AG04450 (cell line): ENCODE measurements at regions of chr1 and their contacts with region 1.

Region 1: GRCh38 chr1:212749821-212750535 is 41.6 kb downstream of the NSL1 start:
- DNase-seq: peak; percentile 54
- H3K4me3 ChIP-seq: no peak overlapping the region
- H3K27ac ChIP-seq: peak overlapping the region; percentile 67
- H3K27me3 ChIP-seq: no peaks in the 10 kb centered on the region
- CTCF ChIP-seq: peak; percentile 81

Region 2: GRCh38 chr1:212366901-212367300 is 383.1 kb before region 1 on chr1:
- CTCF ChIA-PET with region 1: no interaction called
- POLR2A ChIA-PET with region 1: no interaction called
- DNase-seq: peak; percentile 3
- H3K4me3 ChIP-seq: no peak overlapping the region
- H3K27ac ChIP-seq: no peak overlapping the region
- H3K27me3 ChIP-seq: no peaks in the 10 kb centered on the region
- CTCF ChIP-seq: no peak

Region 3: GRCh38 chr1:212477014-212477679 is 272.8 kb before region 1 on chr1:
- CTCF ChIA-PET with region 1: interaction called, 16 read pairs
- POLR2A ChIA-PET with region 1: no interaction called
- DNase-seq: peak; percentile 71
- H3K4me3 ChIP-seq: no peak overlapping the region
- H3K27ac ChIP-seq: no peak overlapping the region
- H3K27me3 ChIP-seq: peaks cover 12% of the 10 kb centered on the region
- CTCF ChIP-seq: peak; percentile 97

Region 4: GRCh38 chr1:212671342-212672031 is 78.5 kb before region 1 on chr1:
- CTCF ChIA-PET with region 1: interaction called, 10 read pairs
- POLR2A ChIA-PET with region 1: no interaction called
- DNase-seq: no peak
- H3K4me3 ChIP-seq: no peak overlapping the region; the same call in 1 of the 2 replicates
- H3K27ac ChIP-seq: no peak overlapping the region
- H3K27me3 ChIP-seq: no peaks in the 10 kb centered on the region
- CTCF ChIP-seq: no peak

Region 5: GRCh38 chr1:212683357-212683722 is 66.6 kb before region 1 on chr1:
- CTCF ChIA-PET with region 1: no interaction called
- POLR2A ChIA-PET with region 1: no interaction called
- DNase-seq: no peak
- H3K4me3 ChIP-seq: no peak overlapping the region
- H3K27ac ChIP-seq: no peak overlapping the region
- H3K27me3 ChIP-seq: no peaks in the 10 kb centered on the region
- CTCF ChIP-seq: no peak

Region 6: DNA sequence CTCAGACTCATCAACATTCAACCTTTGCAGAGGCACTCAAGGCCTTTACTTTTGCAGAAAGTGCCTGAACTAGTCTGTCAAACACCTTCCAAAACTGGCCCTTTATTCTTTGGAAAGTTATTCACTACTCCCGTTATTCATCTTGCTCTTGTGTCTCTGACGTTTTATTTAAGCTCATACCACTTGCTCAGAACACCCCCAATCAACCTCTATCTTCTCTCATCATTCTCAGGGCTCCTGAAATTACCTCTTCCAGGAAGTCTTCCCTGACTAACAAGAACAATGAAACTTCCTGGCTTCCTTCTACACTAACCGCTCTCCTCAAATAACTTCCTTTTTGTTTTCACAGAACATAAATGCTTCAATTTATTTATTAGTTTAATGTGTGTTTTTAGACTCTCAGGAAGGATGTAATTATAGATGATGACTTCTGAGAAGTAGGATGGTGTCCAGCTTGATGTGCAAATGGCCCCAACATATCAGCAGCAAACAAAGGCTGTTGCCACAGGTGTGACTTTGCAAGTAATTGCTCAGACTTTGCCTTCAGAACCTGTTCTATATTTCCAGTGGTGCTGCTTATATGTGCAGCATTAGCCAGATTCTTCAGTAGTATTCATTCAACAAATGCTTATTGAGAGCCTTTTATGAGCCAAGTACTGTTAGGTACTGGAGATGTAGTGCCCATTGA is 27.6 kb before region 1 on chr1:
- CTCF ChIA-PET with region 1: interaction called, 12 read pairs
- POLR2A ChIA-PET with region 1: no interaction called
- DNase-seq: no peak
- H3K4me3 ChIP-seq: no peak overlapping the region
- H3K27ac ChIP-seq: no peak overlapping the region
- H3K27me3 ChIP-seq: no peaks in the 10 kb centered on the region
- CTCF ChIP-seq: no peak

Region 7: DNA sequence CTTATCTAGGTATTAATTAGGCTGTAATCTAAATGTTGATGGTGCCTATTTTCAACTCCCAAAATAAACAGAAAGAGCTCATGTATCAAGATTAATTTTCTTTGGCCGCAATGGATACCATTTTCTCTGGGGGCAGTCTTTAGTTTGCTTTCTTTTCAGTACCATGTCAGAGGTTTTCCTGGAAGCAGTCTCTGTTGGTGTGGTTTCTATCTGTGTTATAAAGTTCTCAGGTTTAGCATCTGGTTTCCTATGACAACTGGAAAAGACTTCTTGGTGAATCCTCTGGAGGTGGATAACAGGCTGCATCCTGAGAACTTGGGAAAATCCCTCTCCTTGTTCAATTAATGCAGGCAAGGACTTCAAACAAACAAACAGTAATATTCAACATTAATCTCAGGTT is 11.6 kb before region 1 on chr1:
- CTCF ChIA-PET with region 1: interaction called, 68 read pairs
- POLR2A ChIA-PET with region 1: no interaction called
- DNase-seq: no peak
- H3K4me3 ChIP-seq: no peak overlapping the region
- H3K27ac ChIP-seq: no peak overlapping the region
- H3K27me3 ChIP-seq: no peaks in the 10 kb centered on the region
- CTCF ChIP-seq: no peak

Region 8: GRCh38 chr1:212769459-212770167 is 19.6 kb after region 1 on chr1:
- CTCF ChIA-PET with region 1: interaction called, 66 read pairs
- POLR2A ChIA-PET with region 1: interaction called, 3 read pairs
- DNase-seq: no peak
- H3K4me3 ChIP-seq: no peak overlapping the region
- H3K27ac ChIP-seq: no peak overlapping the region
- H3K27me3 ChIP-seq: no peaks in the 10 kb centered on the region
- CTCF ChIP-seq: no peak

Region 9: DNA sequence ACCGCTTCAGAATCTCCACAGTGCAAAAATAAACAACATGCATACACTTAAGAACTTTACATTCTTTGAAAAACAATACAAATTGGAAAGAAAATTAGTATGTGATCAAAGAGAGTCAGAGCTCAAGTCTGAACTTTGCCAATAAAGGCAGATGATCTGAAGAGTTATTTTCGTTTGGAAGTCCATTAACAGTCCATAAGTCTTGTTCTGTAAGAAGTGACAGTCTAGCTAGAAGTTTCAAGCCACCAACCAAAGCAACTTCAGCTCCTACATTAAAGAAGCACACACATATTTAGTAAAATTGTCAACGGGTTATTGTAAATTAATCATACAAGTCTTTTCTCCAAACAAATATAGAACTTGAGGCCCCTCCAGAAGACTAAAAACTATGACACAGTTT is 244.9 kb after region 1 on chr1:
- CTCF ChIA-PET with region 1: interaction called, 23 read pairs
- POLR2A ChIA-PET with region 1: no interaction called
- DNase-seq: no peak
- H3K4me3 ChIP-seq: no peak overlapping the region
- H3K27ac ChIP-seq: no peak overlapping the region
- H3K27me3 ChIP-seq: no peaks in the 10 kb centered on the region
- CTCF ChIP-seq: no peak